ENCODE measurements at regions of chr14 and their contacts with region 1.

Region 1: GRCh38 chr14:34098045-34098984 is 147.4 kb upstream of the EGLN3 start:
- DNase-seq: peak; percentile 43 to 64
- H3K4me3 ChIP-seq: no peak overlapping the region
- H3K4me3 Mint-ChIP-seq: no peak overlapping the region
- H3K27ac Mint-ChIP-seq: peak overlapping the region; percentile 57
- H3K4me1 ChIP-seq: peaks cover 39% of the 10 kb centered on the region
- H3K4me1 Mint-ChIP-seq: peaks cover 30% of the 10 kb centered on the region
- H3K27me3 ChIP-seq: no peaks in the 10 kb centered on the region
- H3K27me3 Mint-ChIP-seq: no peaks in the 10 kb centered on the region
- CTCF ChIP-seq: peak; percentile 67 to 71

Region 2: GRCh38 chr14:33839193-33840076 is 258.9 kb before region 1 on chr14:
- CTCF ChIA-PET with region 1: interaction called, 9 read pairs
- POLR2A ChIA-PET with region 1: interaction called, 3 read pairs
- intact Hi-C with region 1: loop called (anchors 1 kb)
- DNase-seq: peak; percentile 54 to 73
- H3K4me3 ChIP-seq: no peak overlapping the region
- H3K4me3 Mint-ChIP-seq: no peak overlapping the region
- H3K27ac Mint-ChIP-seq: no peak overlapping the region
- H3K4me1 ChIP-seq: peaks cover 10% of the 10 kb centered on the region
- H3K4me1 Mint-ChIP-seq: no peaks in the 10 kb centered on the region
- H3K27me3 ChIP-seq: no peaks in the 10 kb centered on the region
- H3K27me3 Mint-ChIP-seq: no peaks in the 10 kb centered on the region
- CTCF ChIP-seq: peak; percentile 74 to 78

Region 3: DNA sequence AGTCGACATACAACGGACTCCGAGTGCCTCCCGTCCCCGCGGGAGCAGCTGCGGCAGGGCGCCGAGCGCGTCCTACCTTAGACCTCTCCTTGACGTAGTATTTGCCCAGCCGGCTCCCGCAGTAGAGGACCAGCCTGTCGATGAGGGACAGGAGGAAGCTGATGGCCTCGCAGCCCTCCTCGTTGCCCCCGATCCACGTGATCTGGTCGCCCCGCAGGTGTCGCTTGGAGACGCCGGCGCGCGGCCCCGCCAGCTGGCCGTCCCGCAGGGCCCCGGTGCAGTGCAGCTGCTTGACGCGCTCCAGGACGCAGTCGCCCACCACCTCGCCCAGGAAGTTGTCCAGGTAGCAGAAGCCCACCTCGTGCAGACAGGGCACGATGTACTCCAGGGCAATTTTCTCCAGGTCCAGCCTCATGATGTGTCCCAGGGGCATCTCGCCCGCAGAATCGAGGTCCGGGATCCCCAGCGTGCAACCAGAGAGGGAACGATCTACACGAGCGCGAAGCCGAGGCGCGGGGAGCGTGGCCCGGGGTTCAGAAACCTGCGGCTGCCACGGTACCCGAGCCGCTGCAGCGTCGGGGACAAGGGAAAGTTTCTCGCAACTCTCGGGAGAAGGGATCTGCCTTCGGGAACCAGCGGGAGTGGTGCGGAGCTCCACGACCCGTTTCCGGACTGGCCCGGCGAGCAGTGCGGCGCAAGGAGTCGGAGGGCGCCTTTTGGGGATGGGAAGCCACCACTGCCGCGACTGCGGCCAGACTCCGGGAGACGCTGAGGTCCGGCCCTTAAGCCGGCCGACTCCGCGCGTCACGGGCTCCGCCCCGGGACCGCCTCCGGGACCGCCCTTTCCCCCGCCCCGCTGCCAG is 147.8 kb before region 1 on chr14 and contains the start of gene EGLN3:
- CTCF ChIA-PET with region 1: interaction called, 3 read pairs
- POLR2A ChIA-PET with region 1: interaction called, 4 read pairs
- intact Hi-C with region 1: loop called (anchors 1 kb)
- DNase-seq: peak; percentile 90 to 94
- H3K4me3 ChIP-seq: peak within 1 kb of the TSS; percentile 57
- H3K4me3 Mint-ChIP-seq: peak within 1 kb of the TSS; percentile 92
- H3K27ac Mint-ChIP-seq: peak within 1 kb of the TSS; percentile 70
- H3K4me1 ChIP-seq: peaks cover 9% of the 10 kb centered on the region
- H3K4me1 Mint-ChIP-seq: peaks cover 10% of the 10 kb centered on the region
- H3K27me3 ChIP-seq: no peaks in the 10 kb centered on the region
- H3K27me3 Mint-ChIP-seq: no peaks in the 10 kb centered on the region
- CTCF ChIP-seq: no peak
- total RNA-seq, gene EGLN3: 9.5 and 12.0 TPM in 2 replicates

Region 4: GRCh38 chr14:34049790-34050189 is 48.5 kb before region 1 on chr14:
- CTCF ChIA-PET with region 1: no interaction called
- POLR2A ChIA-PET with region 1: no interaction called
- intact Hi-C with region 1: no loop called
- DNase-seq: no peak
- H3K4me3 ChIP-seq: no peak overlapping the region
- H3K4me3 Mint-ChIP-seq: no peak overlapping the region
- H3K27ac Mint-ChIP-seq: peak overlapping the region; percentile 57
- H3K4me1 ChIP-seq: peaks cover 45% of the 10 kb centered on the region
- H3K4me1 Mint-ChIP-seq: peaks cover 57% of the 10 kb centered on the region
- H3K27me3 ChIP-seq: no peaks in the 10 kb centered on the region
- H3K27me3 Mint-ChIP-seq: no peaks in the 10 kb centered on the region
- CTCF ChIP-seq: no peak

Region 5: GRCh38 chr14:34113005-34113511 is 14.7 kb after region 1 on chr14:
- CTCF ChIA-PET with region 1: interaction called, 7 read pairs
- POLR2A ChIA-PET with region 1: no interaction called
- intact Hi-C with region 1: loop called (anchors 1 kb)
- DNase-seq: peak; percentile 64 to 68
- H3K4me3 ChIP-seq: no peak overlapping the region
- H3K4me3 Mint-ChIP-seq: peak overlapping the region; percentile 61
- H3K27ac Mint-ChIP-seq: peak overlapping the region; percentile 48
- H3K4me1 ChIP-seq: peaks cover 32% of the 10 kb centered on the region
- H3K4me1 Mint-ChIP-seq: peaks cover 43% of the 10 kb centered on the region
- H3K27me3 ChIP-seq: no peaks in the 10 kb centered on the region
- H3K27me3 Mint-ChIP-seq: no peaks in the 10 kb centered on the region
- CTCF ChIP-seq: no peak

Region 6: DNA sequence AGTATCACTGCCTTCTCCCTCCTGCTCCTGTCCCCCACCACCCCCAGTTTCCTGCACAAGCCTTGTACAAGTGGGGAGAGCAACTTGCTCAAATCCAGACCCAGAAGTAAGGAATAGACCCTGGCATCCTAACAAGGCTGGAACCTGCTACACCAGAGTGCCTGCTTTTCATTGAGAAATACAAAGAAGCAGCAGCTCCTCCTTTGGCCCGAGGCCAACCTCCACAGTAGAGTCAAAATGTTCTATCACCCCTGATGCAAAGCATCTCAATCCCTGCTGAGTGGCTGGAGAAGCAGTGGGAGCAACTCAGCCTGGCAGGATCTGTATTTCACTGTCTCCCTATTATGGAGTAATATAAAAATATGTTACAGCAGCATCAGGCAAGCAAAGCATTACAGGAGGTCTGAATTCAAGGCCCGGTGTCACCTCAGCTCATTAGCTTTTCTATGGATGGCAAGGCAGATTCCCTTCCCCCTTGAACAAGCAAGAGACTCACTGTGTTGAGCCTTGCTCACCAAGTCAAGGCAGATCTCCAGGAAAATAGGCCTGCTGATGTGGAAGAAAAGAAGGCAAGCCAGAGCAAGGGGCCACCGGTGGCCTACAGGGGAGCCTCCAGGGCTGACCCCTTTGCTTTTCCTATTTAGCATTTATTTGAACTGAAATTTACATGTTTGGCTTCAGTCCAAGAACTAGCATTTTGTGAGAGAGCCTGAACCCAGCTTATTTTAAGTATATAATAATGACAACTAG is 38.9 kb after region 1 on chr14:
- CTCF ChIA-PET with region 1: no interaction called
- POLR2A ChIA-PET with region 1: no interaction called
- intact Hi-C with region 1: no loop called
- DNase-seq: no peak
- H3K4me3 ChIP-seq: no peak overlapping the region
- H3K4me3 Mint-ChIP-seq: no peak overlapping the region
- H3K27ac Mint-ChIP-seq: no peak overlapping the region
- H3K4me1 ChIP-seq: peaks cover 11% of the 10 kb centered on the region
- H3K4me1 Mint-ChIP-seq: peaks cover 6% of the 10 kb centered on the region
- H3K27me3 ChIP-seq: no peaks in the 10 kb centered on the region
- H3K27me3 Mint-ChIP-seq: no peaks in the 10 kb centered on the region
- CTCF ChIP-seq: no peak

Region 7: DNA sequence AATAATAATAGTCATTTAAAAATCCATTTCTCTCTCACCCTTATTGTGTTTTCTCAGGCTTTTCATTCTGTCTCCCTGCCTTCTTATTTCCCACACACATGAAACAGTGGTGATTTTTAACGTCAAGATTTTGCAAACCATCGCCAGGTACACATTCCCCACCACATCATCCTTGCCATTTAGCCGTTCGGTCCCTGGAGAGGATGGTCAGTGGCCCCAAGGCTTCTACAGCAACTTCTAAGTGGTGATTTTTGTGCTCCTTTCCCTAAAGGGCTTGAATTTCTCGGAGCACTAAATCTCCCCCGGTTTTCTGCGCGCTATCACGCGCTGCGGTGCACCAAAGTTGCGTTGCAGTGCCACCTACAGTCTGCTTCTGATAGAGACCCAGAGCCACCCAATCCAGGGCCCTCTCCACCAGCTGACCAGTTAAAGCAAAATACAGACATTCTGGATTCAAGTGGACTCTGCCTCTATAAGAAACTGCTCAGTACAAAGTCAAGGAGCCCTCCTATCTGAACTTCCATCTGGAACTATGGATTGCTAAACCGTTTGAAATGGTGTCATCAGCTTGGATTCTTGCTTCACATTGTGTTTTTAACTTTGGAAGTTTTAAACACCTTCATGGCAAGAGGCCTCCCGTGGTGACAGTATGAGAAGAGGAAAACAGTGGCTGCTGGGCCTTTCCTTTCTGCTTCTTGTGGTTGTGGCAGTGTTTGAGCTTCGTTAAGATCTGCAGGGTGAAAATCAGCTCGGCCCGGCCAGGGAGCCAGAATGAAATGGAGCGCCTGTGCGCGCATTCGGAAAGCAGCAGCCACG is 129.7 kb after region 1 on chr14:
- CTCF ChIA-PET with region 1: interaction called, 7 read pairs
- POLR2A ChIA-PET with region 1: no interaction called
- intact Hi-C with region 1: loop called (anchors 1 kb)
- DNase-seq: peak; percentile 76 to 82
- H3K4me3 ChIP-seq: no peak overlapping the region
- H3K4me3 Mint-ChIP-seq: peak overlapping the region; percentile 61
- H3K27ac Mint-ChIP-seq: peak overlapping the region; percentile 80
- H3K4me1 ChIP-seq: peaks cover 51% of the 10 kb centered on the region
- H3K4me1 Mint-ChIP-seq: peaks cover 54% of the 10 kb centered on the region
- H3K27me3 ChIP-seq: no peaks in the 10 kb centered on the region
- H3K27me3 Mint-ChIP-seq: no peaks in the 10 kb centered on the region
- CTCF ChIP-seq: peak; percentile 70 to 92

Region 8: DNA sequence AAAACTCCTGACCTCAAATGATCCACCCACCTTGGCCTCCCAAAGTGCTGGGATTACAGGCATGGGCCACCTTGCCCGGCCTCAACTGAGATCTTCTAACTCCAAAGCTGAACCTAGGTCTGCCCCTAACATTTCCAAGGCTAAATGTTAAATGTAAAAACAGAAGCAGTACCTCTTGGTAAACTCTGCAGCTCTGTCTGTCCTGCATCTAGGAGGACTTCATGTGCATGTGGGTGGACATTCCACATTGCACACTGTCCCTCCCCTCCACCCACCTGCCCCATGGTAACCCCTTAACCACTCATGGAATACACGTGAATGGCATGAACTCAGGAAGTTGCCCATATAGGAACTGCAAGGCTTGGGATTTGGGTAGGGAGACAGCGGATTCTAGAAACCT is 498.6 kb after region 1 on chr14:
- CTCF ChIA-PET with region 1: no interaction called
- POLR2A ChIA-PET with region 1: no interaction called
- intact Hi-C with region 1: no loop called
- DNase-seq: no peak
- H3K4me3 ChIP-seq: no peak overlapping the region
- H3K4me3 Mint-ChIP-seq: no peak overlapping the region
- H3K27ac Mint-ChIP-seq: no peak overlapping the region
- H3K4me1 ChIP-seq: no peaks in the 10 kb centered on the region
- H3K4me1 Mint-ChIP-seq: no peaks in the 10 kb centered on the region
- H3K27me3 ChIP-seq: no peaks in the 10 kb centered on the region
- H3K27me3 Mint-ChIP-seq: no peaks in the 10 kb centered on the region
- CTCF ChIP-seq: no peak